GM10248 (cell line): ENCODE measurements at regions of chr7 and their contacts with region 1.

Region 1: DNA sequence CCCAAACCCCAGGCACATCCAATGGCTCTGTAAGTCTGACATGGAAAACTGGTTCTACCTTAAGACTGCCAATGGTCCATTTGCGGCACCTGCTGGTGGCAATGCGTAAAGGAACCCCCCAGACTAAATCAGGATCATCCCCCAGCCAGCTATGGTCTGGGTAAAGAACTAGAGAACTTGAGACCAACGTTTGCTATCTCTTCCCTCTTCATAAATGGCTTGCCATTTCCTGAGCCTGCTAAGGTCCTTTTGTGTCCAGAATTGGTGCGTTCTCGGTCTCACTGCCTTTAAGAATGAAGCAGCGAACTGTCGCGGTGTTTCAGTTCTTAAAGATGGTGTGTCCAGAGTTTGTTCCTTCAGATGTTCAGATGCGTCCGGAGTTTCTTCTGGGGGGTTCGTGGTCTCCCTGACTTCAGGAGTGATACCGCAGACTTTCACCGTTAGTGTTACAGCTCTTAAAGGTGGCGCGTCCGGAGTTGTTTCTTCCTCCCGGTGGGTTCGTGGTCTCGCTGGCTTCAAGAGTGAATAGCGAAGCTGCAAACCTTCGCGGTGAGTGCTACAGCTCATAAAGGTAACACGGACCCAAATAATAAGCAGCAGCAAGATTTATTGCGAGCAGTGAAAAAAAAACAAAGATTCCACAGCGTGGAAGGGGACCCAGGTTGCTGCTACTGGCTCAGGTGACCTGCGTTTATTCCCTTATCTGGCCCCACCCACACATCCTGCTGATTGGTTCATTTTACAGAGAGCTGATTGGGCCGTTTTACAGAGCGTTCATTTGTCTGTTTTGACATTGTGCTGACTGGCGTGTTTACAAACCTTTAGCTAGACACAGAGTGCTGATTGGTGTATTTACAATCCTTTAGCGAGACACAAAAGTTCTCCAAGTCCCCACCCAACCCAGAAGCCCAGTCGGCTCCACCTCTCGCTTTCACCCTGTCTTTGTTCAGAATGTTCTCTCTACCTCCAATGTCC is 95.4 kb downstream of the ELMO1 start:
- DNase-seq: peak; percentile 58
- CTCF ChIP-seq: peak; percentile 86

Region 2: GRCh38 chr7:37208528-37208927 is 144.7 kb before region 1 on chr7:
- CTCF ChIA-PET with region 1: interaction called, 47 read pairs
- POLR2A ChIA-PET with region 1: no interaction called
- DNase-seq: peak; percentile 42
- CTCF ChIP-seq: peak; percentile 69

Region 3: GRCh38 chr7:37247861-37248260 is 105.4 kb before region 1 on chr7:
- CTCF ChIA-PET with region 1: interaction called, 12 read pairs
- POLR2A ChIA-PET with region 1: no interaction called
- DNase-seq: no peak
- CTCF ChIP-seq: no peak

Region 4: GRCh38 chr7:37336259-37336658 is 17.0 kb before region 1 on chr7:
- CTCF ChIA-PET with region 1: interaction called, 55 read pairs
- POLR2A ChIA-PET with region 1: interaction called, 5 read pairs
- DNase-seq: peak; percentile 77
- CTCF ChIP-seq: no peak